Prostate gland (tissue), 2 donors: ENCODE measurements at regions of chr4 and their contacts with region 1.

Region 1: GRCh38 chr4:113761620-113762185 is at the start of gene CAMK2D:
- DNase-seq: peak; percentile 91
- H3K4me3 ChIP-seq: peak within 1 kb of the TSS; percentile 65 to 70
- H3K27ac ChIP-seq: peak within 1 kb of the TSS; percentile 96 to 99
- H3K4me1 ChIP-seq: no peaks in the 10 kb centered on the region
- H3K27me3 ChIP-seq: no peaks in the 10 kb centered on the region
- CTCF ChIP-seq: peak; percentile 63 to 88 (median 76)
- POLR2A ChIP-seq: peak; percentile 70
- total RNA-seq, gene CAMK2D: 48.7 to 88.8 TPM

Region 2: GRCh38 chr4:113292371-113293042 is 469.2 kb before region 1 on chr4:
- intact Hi-C with region 1: loop called (anchors 5 kb)
- DNase-seq: no peak
- H3K4me3 ChIP-seq: no peak overlapping the region
- H3K27ac ChIP-seq: peak overlapping the region; percentile 8 to 62
- H3K4me1 ChIP-seq: no peaks in the 10 kb centered on the region
- H3K27me3 ChIP-seq: no peaks in the 10 kb centered on the region
- CTCF ChIP-seq: no peak
- POLR2A ChIP-seq: no peak

Region 3: DNA sequence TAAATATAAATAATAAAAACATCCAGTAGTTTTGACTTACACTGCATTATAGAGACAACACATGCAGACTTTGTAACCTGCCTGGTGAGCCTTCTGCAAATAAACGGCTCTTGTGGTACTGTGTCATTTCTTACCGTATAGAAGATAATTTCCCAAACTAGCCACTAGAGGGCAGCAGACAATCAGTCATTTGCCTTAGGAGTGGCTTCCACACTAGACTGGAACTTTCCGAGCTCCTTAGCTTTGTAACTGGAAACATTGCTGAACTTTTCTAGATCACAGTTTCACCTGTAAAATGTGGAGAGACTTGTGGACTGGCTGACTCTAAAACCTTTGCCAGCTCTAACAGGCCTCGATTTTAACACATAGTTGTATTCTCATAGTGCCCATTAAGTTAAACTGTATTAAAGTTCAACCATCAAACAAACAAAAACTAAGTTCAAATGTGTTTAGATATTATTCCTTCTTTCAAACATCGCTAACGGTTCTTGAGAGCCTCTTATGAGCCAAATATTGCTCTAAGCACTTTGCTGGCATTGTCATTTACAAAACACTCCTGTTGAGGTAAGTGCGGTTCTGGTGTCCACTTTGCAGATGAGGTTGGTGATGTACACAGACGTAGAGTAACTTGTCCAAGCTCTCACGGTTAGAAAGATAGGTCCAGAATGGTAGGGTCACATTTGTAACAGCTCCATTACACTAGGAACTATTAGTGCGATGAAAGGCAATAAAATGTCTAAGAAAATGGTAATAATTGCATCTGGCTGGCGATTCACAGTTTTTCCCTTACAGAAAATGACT is 366.8 kb before region 1 on chr4:
- intact Hi-C with region 1: loop called (anchors 2 kb)
- DNase-seq: peak; percentile 85
- H3K4me3 ChIP-seq: no peak overlapping the region
- H3K27ac ChIP-seq: no peak overlapping the region
- H3K4me1 ChIP-seq: no peaks in the 10 kb centered on the region
- H3K27me3 ChIP-seq: no peaks in the 10 kb centered on the region
- CTCF ChIP-seq: peak; percentile 77 to 97 (median 91)
- POLR2A ChIP-seq: peak; percentile 13

Region 4: DNA sequence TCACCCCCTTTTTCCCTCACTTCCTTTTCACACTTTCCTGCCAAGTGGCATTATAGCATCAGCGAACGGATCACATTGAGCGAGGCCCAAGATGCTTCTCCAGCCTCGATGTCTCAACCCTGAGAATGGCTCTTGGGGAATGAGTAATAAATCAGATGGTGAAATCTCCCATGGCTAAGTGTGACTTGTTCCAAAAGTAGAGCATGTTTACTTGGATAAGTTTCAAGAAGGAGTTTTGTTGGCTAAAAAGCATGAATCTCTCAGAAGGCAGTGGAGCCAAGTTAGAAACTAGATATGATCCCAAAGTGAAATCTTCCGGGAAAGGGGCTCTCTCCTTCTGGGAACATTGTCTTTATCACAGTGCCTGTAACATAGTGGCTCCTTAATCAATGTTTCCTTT is 316.4 kb before region 1 on chr4:
- intact Hi-C with region 1: loop called (anchors 5 kb)
- DNase-seq: no peak
- H3K4me3 ChIP-seq: no peak overlapping the region
- H3K27ac ChIP-seq: no peak overlapping the region
- H3K4me1 ChIP-seq: no peaks in the 10 kb centered on the region
- H3K27me3 ChIP-seq: no peaks in the 10 kb centered on the region
- CTCF ChIP-seq: no peak
- POLR2A ChIP-seq: no peak

Region 5: DNA sequence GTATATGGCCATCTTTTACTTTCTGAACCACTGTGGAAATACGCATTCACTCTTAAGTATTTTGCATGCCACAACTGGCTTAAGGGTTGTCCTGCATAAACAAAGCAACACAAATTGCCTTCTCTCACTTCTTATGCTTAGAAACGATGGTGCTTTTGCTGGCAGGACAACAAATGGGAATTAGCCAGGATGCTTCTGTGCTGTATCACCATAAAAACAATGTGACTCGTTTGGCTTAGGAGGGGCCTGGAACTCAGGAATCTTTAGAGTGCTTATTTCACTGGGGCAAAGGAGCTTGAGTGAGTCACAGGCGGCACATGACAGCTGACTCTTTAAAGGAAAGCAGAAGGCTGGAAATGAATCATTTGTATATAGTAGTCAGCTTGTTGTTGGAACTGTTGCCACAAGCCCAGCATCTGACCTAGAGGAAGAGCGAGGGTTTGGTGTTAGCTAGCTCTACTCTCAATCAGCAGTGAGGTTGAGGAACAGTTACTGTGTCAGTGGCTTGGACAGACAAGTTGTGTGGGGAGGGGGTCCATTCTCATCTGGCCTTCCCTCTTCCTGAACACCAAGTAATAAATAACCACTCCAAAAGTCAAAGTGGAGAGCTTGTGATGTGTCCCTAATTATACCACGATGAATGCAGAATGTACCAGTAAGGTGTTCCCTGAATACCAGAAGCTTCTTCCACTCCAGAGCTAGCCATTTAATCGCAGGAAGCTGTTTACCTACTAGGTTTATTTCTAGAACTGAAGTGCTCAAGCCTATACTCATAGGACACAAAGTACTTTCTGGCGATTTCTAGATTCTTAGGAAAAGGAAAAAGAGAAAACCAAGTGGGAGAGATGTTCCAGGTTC is 293.3 kb before region 1 on chr4:
- intact Hi-C with region 1: loop called (anchors 5 kb)
- DNase-seq: peak; percentile 23
- H3K4me3 ChIP-seq: no peak overlapping the region
- H3K27ac ChIP-seq: peak overlapping the region; percentile 56 to 67
- H3K4me1 ChIP-seq: no peaks in the 10 kb centered on the region
- H3K27me3 ChIP-seq: no peaks in the 10 kb centered on the region
- CTCF ChIP-seq: no peak
- POLR2A ChIP-seq: no peak

Region 6: DNA sequence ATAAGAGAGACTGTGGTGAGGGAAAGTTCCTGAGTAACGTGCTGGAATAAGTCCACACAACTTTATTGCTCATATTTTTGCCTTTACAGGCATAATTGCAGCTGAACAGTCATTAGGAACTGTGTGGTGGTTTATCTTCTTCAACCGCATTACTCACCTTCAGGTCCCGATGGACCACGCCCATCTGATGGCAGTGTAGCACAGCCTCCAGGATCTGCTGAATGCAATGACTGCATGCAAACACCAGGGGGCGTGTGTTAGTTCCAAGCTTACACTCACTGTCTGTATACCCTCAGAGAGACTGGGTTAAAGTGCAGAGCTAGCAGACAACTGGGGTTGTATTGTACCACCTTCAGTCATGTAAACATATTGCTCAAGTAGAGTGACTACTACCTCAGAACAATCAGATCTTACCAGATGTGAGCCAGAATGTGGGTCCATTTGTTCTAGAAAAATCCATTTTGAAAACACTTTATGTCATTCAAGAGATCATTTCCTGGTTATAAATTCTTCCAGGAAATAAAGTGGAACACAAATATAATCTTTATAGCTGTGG is 214.1 kb before region 1 on chr4:
- intact Hi-C with region 1: loop called (anchors 1 kb)
- DNase-seq: peak; percentile 83
- H3K4me3 ChIP-seq: no peak overlapping the region
- H3K27ac ChIP-seq: peak overlapping the region; percentile 32 to 35
- H3K4me1 ChIP-seq: no peaks in the 10 kb centered on the region
- H3K27me3 ChIP-seq: no peaks in the 10 kb centered on the region
- CTCF ChIP-seq: peak; percentile 95 to 99 (median 96)
- POLR2A ChIP-seq: no peak

Region 7: DNA sequence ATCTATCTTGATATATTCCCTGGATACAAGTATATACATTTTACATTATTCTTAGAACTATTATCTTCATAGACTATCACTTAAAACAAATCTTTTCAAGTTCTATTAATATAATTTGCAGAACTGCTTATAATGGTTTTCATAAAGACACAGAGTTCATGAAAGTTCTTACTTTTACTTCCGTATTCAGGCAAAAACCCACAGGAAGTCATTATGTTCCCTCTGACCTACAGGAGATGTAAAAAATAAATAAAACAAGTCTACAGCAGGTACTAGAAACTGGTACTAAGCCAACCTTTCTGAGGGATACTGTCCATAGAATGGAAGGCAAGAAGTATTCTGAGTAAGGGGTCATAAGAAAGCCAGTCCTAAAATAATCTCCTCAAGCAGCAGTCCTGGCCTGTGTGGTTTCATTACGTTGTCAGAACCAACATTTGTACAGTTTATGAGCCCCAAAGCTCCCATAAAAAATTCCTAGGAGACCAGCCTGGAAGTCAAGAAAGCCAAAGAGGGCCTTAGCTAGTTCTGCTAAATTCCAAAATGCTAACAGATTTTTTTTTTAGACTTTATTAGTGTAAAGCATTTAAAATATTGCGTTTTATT is 68.8 kb before region 1 on chr4:
- intact Hi-C with region 1: loop called (anchors 5 kb)
- DNase-seq: no peak
- H3K4me3 ChIP-seq: no peak overlapping the region
- H3K27ac ChIP-seq: peak overlapping the region; percentile 41 to 44
- H3K4me1 ChIP-seq: no peaks in the 10 kb centered on the region
- H3K27me3 ChIP-seq: no peaks in the 10 kb centered on the region
- CTCF ChIP-seq: no peak
- POLR2A ChIP-seq: no peak